SK-N-SH (cell line): ENCODE measurements at regions of chr11 and their contacts with region 1.

Region 1: GRCh38 chr11:1628506-1629325 is 859 bp upstream of the KRTAP5-5 start:
- DNase-seq: peak; percentile 96
- H3K4me3 ChIP-seq: peak overlapping the region in 1 of 2 experiments; percentile 35; a peak in 1 of 4 replicates
- H3K27ac ChIP-seq: no peak overlapping the region
- H3K4me1 ChIP-seq: peaks cover 0 to 11% of the 10 kb centered on the region in 2 experiments; a peak in 1 of 4 replicates
- H3K27me3 ChIP-seq: peaks cover 19% of the 10 kb centered on the region; the same call in 1 of the 2 replicates
- CTCF ChIP-seq: peak; percentile 85
- EP300 ChIP-seq: no peak
- RAD21 ChIP-seq: peak; percentile 69

Region 2: GRCh38 chr11:1640076-1640946 is 11.6 kb after region 1 on chr11:
- CTCF ChIA-PET with region 1: interaction called, 49 read pairs
- POLR2A ChIA-PET with region 1: interaction called, 7 read pairs
- DNase-seq: peak; percentile 86
- H3K4me3 ChIP-seq: no peak overlapping the region; a peak in 1 of 4 replicates
- H3K27ac ChIP-seq: no peak overlapping the region; a peak in 1 of 4 replicates
- H3K4me1 ChIP-seq: peaks cover 0 to 25% of the 10 kb centered on the region in 2 experiments; a peak in 1 of 4 replicates
- H3K27me3 ChIP-seq: no peaks in the 10 kb centered on the region
- CTCF ChIP-seq: peak; percentile 82
- EP300 ChIP-seq: no peak
- RAD21 ChIP-seq: peak; percentile 14; the same call in 1 of the 2 replicates